Activated CD4-positive, alpha-beta T cell treated with anti-CD3 and anti-CD28 coated beads, Interleukin-2, amount 10 ng/mL, durations not matched to agents 24 days and 14 days (primary cell): ENCODE measurements at regions of chr10 and their contacts with region 1.

Region 1: GRCh38 chr10:113854011-113854760 is at the starts of genes DCLRE1A and NHLRC2:
- DNase-seq: peak; percentile 87
- H3K4me3 Mint-ChIP-seq: peak within 1 kb of the TSS; percentile 98
- H3K27ac Mint-ChIP-seq: peak within 1 kb of the TSS; percentile 95
- H3K4me1 Mint-ChIP-seq: peaks cover 33% of the 10 kb centered on the region
- H3K27me3 Mint-ChIP-seq: no peaks in the 10 kb centered on the region
- total RNA-seq, gene DCLRE1A: 14.4 and 14.6 TPM in 2 replicates
- total RNA-seq, gene NHLRC2: 23.6 and 27.2 TPM in 2 replicates

Region 2: DNA sequence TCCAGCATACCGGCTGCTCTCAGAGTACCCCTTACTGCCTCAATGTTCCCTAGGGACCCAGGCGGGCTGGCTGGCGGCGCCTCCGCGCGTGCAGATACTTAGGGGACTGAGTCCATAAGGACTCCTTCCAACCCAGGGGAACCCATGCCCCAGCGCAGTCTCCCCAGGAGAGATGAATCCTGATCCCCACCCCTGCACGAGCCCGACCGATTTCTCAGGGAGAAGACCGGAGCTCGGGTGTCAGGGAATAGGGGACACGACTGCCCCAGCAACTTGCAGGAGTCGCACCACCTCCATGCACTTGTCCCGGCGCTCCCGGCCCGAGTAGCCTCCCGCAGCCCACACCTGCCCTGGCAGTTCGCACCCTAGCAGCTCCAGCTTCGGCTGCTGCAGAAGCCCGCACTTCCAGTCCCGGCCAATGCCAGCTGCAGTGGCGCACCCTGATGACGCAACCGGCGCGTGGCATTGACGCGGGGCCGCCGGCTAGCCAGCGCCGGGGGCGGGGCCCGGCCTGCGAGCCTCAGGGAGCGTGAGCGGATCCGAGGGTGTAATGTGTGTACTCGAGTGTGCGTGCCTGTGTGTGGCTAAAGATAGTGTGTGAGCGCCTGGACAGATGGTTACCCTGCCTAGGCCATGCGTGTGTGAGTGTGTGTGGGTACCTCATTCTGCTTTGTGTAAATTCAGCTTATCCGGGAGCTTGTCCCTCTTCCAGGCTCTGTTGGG is 1670.7 kb before region 1 on chr10 and contains the start of gene GPAM:
- intact Hi-C with region 1: loop called (anchors 10 kb)
- DNase-seq: peak; percentile 100
- H3K4me3 Mint-ChIP-seq: peak within 1 kb of the TSS; percentile 88
- H3K27ac Mint-ChIP-seq: peak within 1 kb of the TSS; percentile 88
- H3K4me1 Mint-ChIP-seq: peaks cover 26% of the 10 kb centered on the region
- H3K27me3 Mint-ChIP-seq: peaks cover 11% of the 10 kb centered on the region
- total RNA-seq, gene GPAM: 8.6 and 9.8 TPM in 2 replicates

Region 3: DNA sequence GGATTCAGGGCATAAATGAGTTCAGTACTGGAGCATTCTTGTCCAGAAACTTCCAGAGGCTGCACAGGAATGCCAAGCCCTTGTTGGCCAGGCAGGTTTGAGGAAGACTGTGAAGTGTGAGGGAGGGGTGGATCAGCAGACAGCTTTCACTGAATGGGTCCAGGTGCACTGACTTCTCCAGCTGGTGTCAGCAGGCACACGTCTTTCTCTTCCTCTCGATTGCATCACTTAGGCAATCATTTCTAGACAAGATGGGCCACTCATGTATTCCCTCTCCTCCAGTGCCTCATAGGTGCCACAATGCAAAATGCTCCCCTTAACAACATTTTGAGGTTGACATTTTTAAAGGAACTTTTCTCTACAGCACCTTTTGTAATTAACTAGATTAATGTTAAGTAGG is 118.3 kb before region 1 on chr10:
- intact Hi-C with region 1: no loop called
- DNase-seq: no peak
- H3K4me3 Mint-ChIP-seq: no peak overlapping the region
- H3K27ac Mint-ChIP-seq: no peak overlapping the region
- H3K4me1 Mint-ChIP-seq: no peaks in the 10 kb centered on the region
- H3K27me3 Mint-ChIP-seq: peaks cover 3% of the 10 kb centered on the region

Region 4: GRCh38 chr10:113866551-113867394 is 12.6 kb after region 1 on chr10:
- intact Hi-C with region 1: no loop called
- DNase-seq: no peak
- H3K4me3 Mint-ChIP-seq: no peak overlapping the region
- H3K27ac Mint-ChIP-seq: no peak overlapping the region
- H3K4me1 Mint-ChIP-seq: peaks cover 7% of the 10 kb centered on the region
- H3K27me3 Mint-ChIP-seq: no peaks in the 10 kb centered on the region

Region 5: GRCh38 chr10:113891476-113891875 is 37.3 kb after region 1 on chr10:
- intact Hi-C with region 1: no loop called
- DNase-seq: no peak
- H3K4me3 Mint-ChIP-seq: no peak overlapping the region
- H3K27ac Mint-ChIP-seq: no peak overlapping the region
- H3K4me1 Mint-ChIP-seq: peaks cover 5% of the 10 kb centered on the region
- H3K27me3 Mint-ChIP-seq: no peaks in the 10 kb centered on the region

Region 6: GRCh38 chr10:113958631-113959382 is 104.6 kb after region 1 on chr10:
- intact Hi-C with region 1: loop called (anchors 1 kb)
- DNase-seq: no peak
- H3K4me3 Mint-ChIP-seq: no peak overlapping the region
- H3K27ac Mint-ChIP-seq: no peak overlapping the region
- H3K4me1 Mint-ChIP-seq: peaks cover 40% of the 10 kb centered on the region
- H3K27me3 Mint-ChIP-seq: peaks cover 20% of the 10 kb centered on the region

Region 7: GRCh38 chr10:114083040-114083439 is 228.9 kb after region 1 on chr10:
- intact Hi-C with region 1: loop called (anchors 5 kb)
- DNase-seq: peak; percentile 73
- H3K4me3 Mint-ChIP-seq: no peak overlapping the region
- H3K27ac Mint-ChIP-seq: no peak overlapping the region
- H3K4me1 Mint-ChIP-seq: no peaks in the 10 kb centered on the region
- H3K27me3 Mint-ChIP-seq: peaks cover 24% of the 10 kb centered on the region

Region 8: GRCh38 chr10:114173921-114174694 is 319.9 kb after region 1 on chr10 and contains the start of gene CCDC186:
- intact Hi-C with region 1: loop called (anchors 2 kb)
- DNase-seq: peak; percentile 99
- H3K4me3 Mint-ChIP-seq: peak within 1 kb of the TSS; percentile 100
- H3K27ac Mint-ChIP-seq: peak within 1 kb of the TSS; percentile 97
- H3K4me1 Mint-ChIP-seq: peaks cover 22% of the 10 kb centered on the region
- H3K27me3 Mint-ChIP-seq: peaks cover 23% of the 10 kb centered on the region
- total RNA-seq, gene CCDC186: 9.0 and 9.4 TPM in 2 replicates